ENCODE measurements at regions of chr11 and their contacts with region 1.

Region 1: GRCh38 chr11:91066456-91067047 is 843.7 kb upstream of the CHORDC1 start:
- DNase-seq: no peak
- H3K4me3 ChIP-seq: no peak overlapping the region
- H3K27ac ChIP-seq: no peak overlapping the region
- H3K4me1 ChIP-seq: no peaks in the 10 kb centered on the region
- H3K27me3 ChIP-seq: no peaks in the 10 kb centered on the region
- CTCF ChIP-seq: no peak
- POLR2A ChIP-seq: no peak

Region 2: GRCh38 chr11:90930252-90930651 is 136.3 kb before region 1 on chr11:
- intact Hi-C with region 1: loop called (anchors 10 kb)
- DNase-seq: no peak
- H3K4me3 ChIP-seq: no peak overlapping the region
- H3K27ac ChIP-seq: no peak overlapping the region
- H3K4me1 ChIP-seq: no peaks in the 10 kb centered on the region
- H3K27me3 ChIP-seq: no peaks in the 10 kb centered on the region
- CTCF ChIP-seq: no peak
- POLR2A ChIP-seq: no peak

Region 3: GRCh38 chr11:91124363-91124762 is 57.8 kb after region 1 on chr11:
- intact Hi-C with region 1: no loop called
- DNase-seq: no peak
- H3K4me3 ChIP-seq: no peak overlapping the region
- H3K27ac ChIP-seq: no peak overlapping the region
- H3K4me1 ChIP-seq: no peaks in the 10 kb centered on the region
- H3K27me3 ChIP-seq: no peaks in the 10 kb centered on the region
- CTCF ChIP-seq: no peak
- POLR2A ChIP-seq: no peak

Region 4: DNA sequence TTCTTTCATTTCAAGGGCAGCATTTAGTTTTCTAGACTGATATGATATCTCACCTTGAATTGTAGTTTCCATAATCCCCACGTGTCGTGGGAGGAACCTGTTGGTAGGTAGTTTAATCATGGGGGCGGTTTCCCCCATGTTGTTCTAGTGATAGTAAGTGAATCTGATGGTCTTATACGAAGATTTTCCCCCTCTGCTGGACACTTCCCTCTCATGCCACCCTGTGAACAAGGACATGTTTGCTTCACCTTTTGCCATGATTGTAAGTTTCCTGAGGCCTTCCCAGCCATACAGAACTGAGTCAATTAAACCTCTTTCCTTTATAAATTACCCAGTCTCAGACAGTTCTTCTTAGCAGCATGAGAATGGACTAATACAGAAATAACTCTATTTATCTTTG is 306.9 kb after region 1 on chr11:
- intact Hi-C with region 1: no loop called
- DNase-seq: no peak
- H3K4me3 ChIP-seq: no peak overlapping the region
- H3K27ac ChIP-seq: no peak overlapping the region
- H3K4me1 ChIP-seq: no peaks in the 10 kb centered on the region
- H3K27me3 ChIP-seq: no peaks in the 10 kb centered on the region
- CTCF ChIP-seq: no peak
- POLR2A ChIP-seq: no peak